Activated CD8-positive, alpha-beta memory T cell treated with anti-CD3 and anti-CD28 coated beads, Interleukin-2, amount 10 ng/mL, durations not matched to agents 7 days and 5 days (primary cell): ENCODE measurements at regions of chr1 and their contacts with region 1.

Region 1: GRCh38 chr1:181105134-181106021 is 16.9 kb downstream of the IER5 start:
- DNase-seq: peak; percentile 93
- ATAC-seq: peak; percentile 87
- H3K4me3 Mint-ChIP-seq: peak overlapping the region; percentile 78
- H3K27ac Mint-ChIP-seq: peak overlapping the region; percentile 69
- H3K4me1 Mint-ChIP-seq: peaks cover 60% of the 10 kb centered on the region
- H3K27me3 Mint-ChIP-seq: peaks cover 42% of the 10 kb centered on the region

Region 2: DNA sequence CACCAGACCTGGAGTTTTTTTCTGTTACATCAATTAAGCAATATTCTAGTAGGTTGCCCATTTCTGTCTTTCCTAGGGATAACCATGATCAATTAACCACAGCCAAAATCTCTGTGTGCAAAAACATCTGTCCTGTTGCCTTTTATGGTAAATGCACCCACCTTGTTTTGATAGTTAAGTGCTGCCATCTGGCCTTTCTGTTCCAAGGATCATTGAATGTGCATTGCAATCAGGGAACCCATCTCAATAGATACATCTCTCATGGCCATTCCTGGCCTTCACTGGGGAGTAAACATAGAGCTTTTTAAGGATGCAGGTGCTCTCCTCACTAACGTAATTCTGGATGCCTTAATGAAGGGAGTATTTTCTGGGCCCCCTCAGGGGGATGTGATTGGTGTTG is 304.4 kb before region 1 on chr1:
- CTCF ChIA-PET with region 1: no interaction called
- DNase-seq: no peak
- ATAC-seq: no peak
- H3K4me3 Mint-ChIP-seq: no peak overlapping the region
- H3K27ac Mint-ChIP-seq: no peak overlapping the region
- H3K4me1 Mint-ChIP-seq: peaks cover 7% of the 10 kb centered on the region
- H3K27me3 Mint-ChIP-seq: no peaks in the 10 kb centered on the region

Region 3: GRCh38 chr1:181021811-181022434 is 83.5 kb before region 1 on chr1:
- CTCF ChIA-PET with region 1: interaction called, 11 read pairs
- DNase-seq: peak; percentile 80
- ATAC-seq: peak; percentile 48
- H3K4me3 Mint-ChIP-seq: peak overlapping the region; percentile 94
- H3K27ac Mint-ChIP-seq: peak overlapping the region; percentile 90
- H3K4me1 Mint-ChIP-seq: peaks cover 39% of the 10 kb centered on the region
- H3K27me3 Mint-ChIP-seq: peaks cover 7% of the 10 kb centered on the region

Region 4: GRCh38 chr1:181128592-181129497 is 23.5 kb after region 1 on chr1:
- CTCF ChIA-PET with region 1: interaction called, 210 read pairs
- DNase-seq: no peak
- ATAC-seq: no peak
- H3K4me3 Mint-ChIP-seq: no peak overlapping the region
- H3K27ac Mint-ChIP-seq: no peak overlapping the region
- H3K4me1 Mint-ChIP-seq: peaks cover 47% of the 10 kb centered on the region
- H3K27me3 Mint-ChIP-seq: no peaks in the 10 kb centered on the region

Region 5: DNA sequence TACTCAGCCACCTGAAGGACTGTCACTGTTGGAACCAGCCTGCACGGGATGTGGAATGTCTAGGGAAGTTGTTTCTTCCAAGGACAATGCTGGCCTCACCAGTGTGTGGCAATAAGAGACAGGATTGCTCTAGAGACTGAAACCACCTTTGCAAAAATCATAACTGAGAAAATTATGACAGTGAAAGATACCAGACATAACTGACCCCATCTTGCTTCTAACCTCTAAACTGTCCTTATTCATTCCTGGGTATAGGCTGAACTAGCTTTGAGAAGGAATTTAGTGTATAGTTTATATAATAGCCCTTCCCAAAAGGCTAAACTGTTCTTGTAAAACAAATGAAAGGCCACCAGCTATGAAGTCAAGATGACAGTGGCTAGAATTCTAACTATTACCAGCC is 66.7 kb after region 1 on chr1:
- CTCF ChIA-PET with region 1: no interaction called
- DNase-seq: no peak
- ATAC-seq: no peak
- H3K4me3 Mint-ChIP-seq: no peak overlapping the region
- H3K27ac Mint-ChIP-seq: no peak overlapping the region
- H3K4me1 Mint-ChIP-seq: peaks cover 6% of the 10 kb centered on the region
- H3K27me3 Mint-ChIP-seq: peaks cover 6% of the 10 kb centered on the region